Right cardiac atrium (tissue), 5 donors: ENCODE measurements at regions of chr18 and their contacts with region 1.

Region 1: DNA sequence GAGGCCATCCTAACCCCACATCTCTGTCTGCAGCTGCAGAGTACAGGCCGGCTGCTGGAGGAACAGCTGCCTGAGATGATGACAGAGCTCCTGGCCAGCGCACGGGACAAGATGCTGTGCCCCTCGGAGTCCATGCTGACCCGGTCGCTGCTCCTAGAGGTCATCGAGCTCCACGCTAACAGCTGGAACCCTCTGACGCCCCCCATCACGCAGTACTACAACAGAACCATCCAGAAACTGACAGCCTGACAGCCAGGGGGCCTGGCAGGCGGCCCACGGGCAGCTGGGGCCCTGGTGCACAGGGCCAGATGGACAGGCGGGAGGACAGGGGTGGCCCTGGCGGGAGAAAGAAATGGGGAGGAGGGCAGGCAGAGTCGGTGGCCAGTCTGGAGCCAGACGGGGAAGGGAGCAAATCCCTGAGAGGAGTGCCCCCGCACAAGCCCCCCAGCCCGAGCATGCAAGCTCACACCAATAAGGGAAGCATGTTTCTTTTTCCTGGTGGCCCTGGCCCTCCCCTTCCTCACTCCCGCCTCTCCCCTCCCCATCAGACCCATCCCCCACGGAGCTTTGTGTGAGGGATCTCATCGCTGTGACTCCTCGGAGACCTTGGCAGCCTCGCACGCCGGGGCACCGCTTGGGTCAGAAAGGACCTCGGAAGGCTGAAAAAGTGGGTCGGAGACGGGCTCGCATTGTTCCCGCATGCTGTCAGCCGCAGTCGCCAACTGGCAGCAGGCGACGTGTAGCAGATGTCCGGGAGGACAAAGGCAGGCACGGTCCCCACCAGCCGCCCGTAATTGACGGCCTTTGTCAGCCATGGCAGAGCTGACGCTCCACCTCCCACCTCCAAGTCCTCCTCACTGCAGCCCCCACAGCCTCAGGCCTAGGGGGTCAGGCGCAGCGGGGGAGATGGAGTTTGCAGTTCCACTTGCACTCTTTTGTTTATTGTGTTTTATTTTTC is 91.2 kb downstream of the SMAD7 start:
- DNase-seq: peak; percentile 77 to 91 (median 91)
- ATAC-seq: peak; percentile 26 to 50
- H3K4me3 ChIP-seq: no peak overlapping the region
- H3K27ac ChIP-seq: peak overlapping the region; percentile 32
- H3K4me1 ChIP-seq: peaks cover 16% of the 10 kb centered on the region
- H3K27me3 ChIP-seq: no peaks in the 10 kb centered on the region

Region 2: GRCh38 chr18:48639772-48640432 is 219.7 kb before region 1 on chr18:
- intact Hi-C with region 1: no loop called
- DNase-seq: peak in 1 of 3 donors; percentile 44
- ATAC-seq: peak in 1 of 2 donors; percentile 25
- H3K4me3 ChIP-seq: no peak overlapping the region
- H3K27ac ChIP-seq: no peak overlapping the region
- H3K4me1 ChIP-seq: no peaks in the 10 kb centered on the region
- H3K27me3 ChIP-seq: no peaks in the 10 kb centered on the region

Region 3: GRCh38 chr18:48913201-48913600 is 53.6 kb after region 1 on chr18:
- intact Hi-C with region 1: loop called in 1 of 4 experiments (anchors 5 kb)
- DNase-seq: peak in 1 of 3 donors; percentile 43
- ATAC-seq: no peak
- H3K4me3 ChIP-seq: no peak overlapping the region
- H3K27ac ChIP-seq: no peak overlapping the region
- H3K4me1 ChIP-seq: peaks cover 4% of the 10 kb centered on the region
- H3K27me3 ChIP-seq: no peaks in the 10 kb centered on the region